Activated CD8-positive, alpha-beta memory T cell treated with anti-CD3 and anti-CD28 coated beads, Interleukin-2, amount 10 ng/mL, durations not matched to agents 7 days and 5 days (primary cell): ENCODE measurements at regions of chr11 and their contacts with region 1.

Region 1: GRCh38 chr11:8033305-8034105 is 46.4 kb downstream of the EIF3F start:
- DNase-seq: peak; percentile 61
- ATAC-seq: peak; percentile 85
- H3K4me3 Mint-ChIP-seq: no peak overlapping the region
- H3K27ac Mint-ChIP-seq: no peak overlapping the region
- H3K4me1 Mint-ChIP-seq: peaks cover 2% of the 10 kb centered on the region
- H3K27me3 Mint-ChIP-seq: peaks cover 5% of the 10 kb centered on the region

Region 2: GRCh38 chr11:7994581-7995278 is 38.8 kb before region 1 on chr11:
- CTCF ChIA-PET with region 1: no interaction called
- DNase-seq: no peak
- ATAC-seq: no peak
- H3K4me3 Mint-ChIP-seq: no peak overlapping the region
- H3K27ac Mint-ChIP-seq: no peak overlapping the region
- H3K4me1 Mint-ChIP-seq: peaks cover 22% of the 10 kb centered on the region
- H3K27me3 Mint-ChIP-seq: no peaks in the 10 kb centered on the region

Region 3: DNA sequence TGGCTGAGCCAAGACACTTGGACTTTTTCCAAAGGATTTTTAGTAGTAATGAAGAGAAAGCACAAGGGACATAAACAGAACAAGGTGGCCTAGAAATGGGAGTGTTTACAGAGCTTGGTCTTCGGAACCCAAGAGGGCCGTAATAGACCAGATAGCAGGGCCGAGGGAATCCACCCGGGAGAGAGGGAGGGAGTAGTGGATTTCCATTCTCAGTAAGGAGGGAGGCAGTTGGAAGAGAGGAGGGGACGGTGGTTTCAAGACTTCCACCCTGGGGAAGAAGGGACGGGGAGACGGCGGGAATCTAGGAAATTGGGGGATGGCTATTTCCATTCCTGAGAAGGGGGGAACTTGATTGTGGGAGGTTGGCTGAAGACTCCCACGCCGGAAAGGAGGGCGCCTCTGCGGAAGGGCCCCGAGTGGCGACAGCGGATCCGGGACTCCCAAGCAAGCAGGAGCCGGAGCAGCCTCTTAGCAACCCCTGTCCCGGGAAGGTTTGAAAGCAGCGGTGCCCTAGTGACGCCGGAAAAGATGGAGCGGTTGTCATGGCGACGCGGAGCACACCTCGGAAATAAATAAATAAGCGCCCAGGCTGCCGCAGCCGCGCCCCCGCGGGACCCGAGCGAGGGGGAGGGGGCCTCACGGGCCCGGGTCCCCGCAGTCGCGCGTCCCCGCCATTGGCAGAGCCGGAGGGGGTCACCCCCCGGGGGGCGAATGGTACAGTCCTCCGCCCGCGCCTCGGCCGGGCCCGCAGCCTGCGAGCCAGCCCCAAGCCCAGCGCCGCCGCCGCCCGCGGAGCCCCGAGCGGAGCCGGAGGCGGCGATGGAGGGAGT is 14.8 kb before region 1 on chr11:
- CTCF ChIA-PET with region 1: interaction called, 13 read pairs
- DNase-seq: peak; percentile 75
- ATAC-seq: peak; percentile 81
- H3K4me3 Mint-ChIP-seq: peak overlapping the region; percentile 55
- H3K27ac Mint-ChIP-seq: peak overlapping the region; percentile 60
- H3K4me1 Mint-ChIP-seq: peaks cover 14% of the 10 kb centered on the region
- H3K27me3 Mint-ChIP-seq: peaks cover 58% of the 10 kb centered on the region

Region 4: DNA sequence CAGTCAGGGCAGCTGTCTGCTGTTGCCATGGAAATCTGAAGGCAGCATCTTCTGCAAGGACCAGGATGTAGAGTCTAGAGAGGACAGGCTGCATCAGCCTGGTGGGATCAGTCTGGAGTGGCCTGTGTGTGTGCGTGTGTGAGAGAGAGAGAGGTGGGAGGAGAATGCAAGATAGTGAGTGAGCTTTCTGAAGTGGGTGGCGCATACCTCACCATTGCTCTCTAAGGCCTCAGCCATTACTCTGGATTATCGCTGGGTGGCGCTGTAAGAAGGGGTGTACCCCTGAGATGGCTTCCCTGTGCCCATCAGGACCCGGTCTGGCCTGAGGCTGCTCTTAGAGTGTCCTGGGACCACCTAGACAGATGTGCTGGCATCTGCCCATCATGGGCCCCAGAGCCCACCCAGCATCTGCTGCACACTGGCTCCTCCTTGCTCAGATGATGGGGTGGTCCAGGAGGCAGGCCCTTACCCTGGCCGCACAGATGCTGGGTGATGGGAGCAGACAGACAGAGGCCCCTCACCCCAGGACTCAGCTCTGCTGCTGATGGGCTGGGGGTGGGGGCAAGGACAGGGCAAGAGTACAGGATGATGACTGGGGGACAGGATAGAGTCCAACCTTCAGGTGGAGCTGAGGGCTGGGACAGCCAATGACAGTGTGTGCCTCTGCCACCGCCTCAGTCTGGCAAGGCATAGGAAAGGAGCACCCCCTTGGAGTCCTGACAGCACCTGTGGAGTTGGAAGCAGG is 21.8 kb after region 1 on chr11:
- CTCF ChIA-PET with region 1: interaction called, 10 read pairs
- DNase-seq: peak; percentile 31
- ATAC-seq: no peak
- H3K4me3 Mint-ChIP-seq: no peak overlapping the region
- H3K27ac Mint-ChIP-seq: no peak overlapping the region
- H3K4me1 Mint-ChIP-seq: peaks cover 5% of the 10 kb centered on the region
- H3K27me3 Mint-ChIP-seq: peaks cover 7% of the 10 kb centered on the region

Region 5: DNA sequence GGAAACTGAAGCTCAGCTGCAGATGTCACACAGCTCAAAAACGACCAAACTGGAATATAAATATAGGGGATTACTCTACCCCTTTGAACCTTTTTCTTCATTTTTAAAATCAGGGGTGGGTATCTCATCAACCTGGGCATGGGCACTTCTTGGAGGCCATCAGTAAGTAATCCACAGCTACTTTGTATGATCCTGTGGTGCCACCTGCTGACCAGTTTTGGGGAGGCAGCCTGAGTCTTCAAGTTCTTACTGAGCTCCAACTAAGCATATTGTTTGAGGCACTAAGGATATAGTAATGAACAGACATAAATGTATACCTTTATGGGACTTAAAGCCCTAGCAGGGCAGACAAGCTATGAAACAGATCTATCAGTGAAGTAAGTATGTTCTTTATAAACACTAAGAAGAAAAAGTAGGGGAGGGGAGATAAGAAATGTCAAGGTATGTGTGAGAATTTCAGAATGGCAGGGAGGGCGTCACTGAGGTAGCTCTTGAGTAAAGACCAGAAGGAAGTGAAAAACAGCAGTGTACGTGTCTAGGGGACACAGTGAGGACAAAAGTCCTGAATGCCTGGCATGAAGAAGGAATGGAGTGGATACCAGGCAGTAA is 65.9 kb after region 1 on chr11:
- CTCF ChIA-PET with region 1: interaction called, 173 read pairs
- DNase-seq: peak; percentile 80
- ATAC-seq: peak; percentile 78
- H3K4me3 Mint-ChIP-seq: no peak overlapping the region
- H3K27ac Mint-ChIP-seq: no peak overlapping the region
- H3K4me1 Mint-ChIP-seq: no peaks in the 10 kb centered on the region
- H3K27me3 Mint-ChIP-seq: no peaks in the 10 kb centered on the region